Activated CD4-positive, alpha-beta T cell treated with anti-CD3 and anti-CD28 coated beads for 36 hours (primary cell): ENCODE measurements at regions of chr19 and their contacts with region 1.

Region 1: DNA sequence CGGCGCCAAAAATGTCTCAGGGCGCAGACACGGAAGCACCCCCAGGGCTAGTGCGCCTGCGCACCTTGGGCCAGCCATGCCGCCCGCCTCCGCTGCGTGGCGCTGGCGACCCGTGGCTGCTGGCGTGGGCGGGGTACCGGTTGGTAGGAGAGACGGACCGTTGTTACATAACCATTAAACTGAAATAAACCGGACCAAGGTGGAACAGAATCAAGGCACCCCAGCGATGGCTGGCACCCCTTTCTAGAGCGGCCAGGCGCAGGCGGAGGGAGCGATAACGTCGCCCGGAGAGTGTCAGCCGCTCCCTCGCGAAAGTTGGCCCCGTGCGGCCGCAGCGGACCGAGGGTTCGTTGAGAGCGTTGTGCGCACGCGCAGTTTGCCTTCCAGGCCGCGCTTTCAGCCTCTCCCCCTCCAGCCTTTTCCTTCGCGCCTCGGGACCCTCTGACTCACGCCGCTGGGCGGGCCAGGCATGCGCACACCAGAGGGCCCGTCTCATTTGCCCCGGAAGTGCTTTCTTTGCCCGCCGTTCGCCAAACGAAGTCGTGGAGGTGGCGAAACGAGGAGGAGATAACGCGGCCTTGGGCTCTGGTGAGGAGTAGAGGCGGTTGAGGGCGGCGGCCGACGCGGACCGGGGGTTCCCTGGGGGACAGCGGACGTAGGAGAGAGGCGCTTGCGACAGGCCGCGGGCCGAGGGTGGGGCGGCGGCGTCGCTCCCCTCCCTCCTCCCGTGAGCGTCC is at the starts of genes PLEKHJ1 and SF3A2:
- DNase-seq: peak; percentile 99
- ATAC-seq: peak; percentile 87
- H3K4me3 Mint-ChIP-seq: peak within 1 kb of the TSS; percentile 94
- H3K27ac Mint-ChIP-seq: peak within 1 kb of the TSS; percentile 97
- H3K4me1 Mint-ChIP-seq: peaks cover 52% of the 10 kb centered on the region
- H3K27me3 Mint-ChIP-seq: no peaks in the 10 kb centered on the region
- total RNA-seq, gene PLEKHJ1: 38.4 to 61.8 TPM
- total RNA-seq, gene SF3A2: 146 to 192 TPM

Region 2: GRCh38 chr19:1905071-1905862 is 331.2 kb before region 1 on chr19 and contains the starts of genes ADAT3 and SCAMP4:
- CTCF ChIA-PET with region 1: no interaction called
- POLR2A ChIA-PET with region 1: no interaction called
- intact Hi-C with region 1: loop called in 1 of 2 experiments (anchors 1 kb)
- DNase-seq: peak; percentile 100
- ATAC-seq: peak; percentile 98
- H3K4me3 Mint-ChIP-seq: peak within 1 kb of the TSS; percentile 84
- H3K27ac Mint-ChIP-seq: peak within 1 kb of the TSS; percentile 82
- H3K4me1 Mint-ChIP-seq: peaks cover 45% of the 10 kb centered on the region
- H3K27me3 Mint-ChIP-seq: no peaks in the 10 kb centered on the region
- total RNA-seq, gene ADAT3: 5.6 to 6.1 TPM
- total RNA-seq, gene SCAMP4: 20.5 to 25.6 TPM

Region 3: DNA sequence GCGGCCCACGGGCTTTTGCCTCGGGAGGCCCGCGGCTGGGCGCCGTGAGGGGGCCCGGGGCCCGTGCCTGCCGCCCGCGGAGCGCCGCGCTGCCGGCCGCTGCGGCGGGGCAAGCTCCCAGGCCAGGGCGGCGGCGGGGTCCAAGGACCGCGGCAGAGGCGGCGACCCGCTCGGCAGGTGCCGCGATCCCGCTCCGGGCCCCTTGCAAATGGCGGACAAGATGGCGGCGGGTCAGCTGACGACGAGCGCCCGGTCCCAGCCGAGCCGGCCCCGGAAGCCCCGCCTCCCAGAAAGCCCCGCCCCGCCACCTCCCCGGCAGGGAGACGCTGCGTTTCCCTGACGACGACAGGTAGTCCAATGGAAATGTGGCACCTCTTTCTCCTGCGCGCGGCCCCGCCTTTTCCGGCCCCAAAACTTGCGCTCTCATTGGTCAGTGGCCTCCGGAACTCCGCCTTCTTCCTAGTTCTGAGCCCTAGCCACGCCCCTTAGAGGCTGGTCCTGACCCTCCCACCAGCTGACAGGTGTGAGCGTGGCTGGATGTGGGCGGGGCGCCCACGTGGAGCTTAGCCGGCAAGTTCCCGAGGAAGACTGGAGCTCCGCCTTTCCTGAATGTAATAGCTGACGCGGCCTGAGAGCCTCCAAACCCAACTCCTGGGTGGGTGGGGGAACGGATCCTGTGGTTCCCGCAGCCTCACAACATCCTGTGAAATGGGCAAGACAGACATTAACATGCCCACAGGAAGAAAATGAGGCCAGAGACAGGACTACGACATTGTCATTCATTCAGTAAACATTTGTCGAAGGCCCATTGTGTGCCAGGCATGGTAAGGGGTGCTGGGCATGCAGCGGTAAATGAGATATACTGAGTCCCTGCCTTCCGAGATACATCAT is 84.9 kb before region 1 on chr19 and contains the start of gene AP3D1:
- CTCF ChIA-PET with region 1: interaction called, 3 read pairs
- POLR2A ChIA-PET with region 1: interaction called, 3 read pairs
- intact Hi-C with region 1: loop called (anchors 1 to 2 kb)
- DNase-seq: peak; percentile 100
- ATAC-seq: peak; percentile 90
- H3K4me3 Mint-ChIP-seq: peak within 1 kb of the TSS; percentile 81
- H3K27ac Mint-ChIP-seq: peak within 1 kb of the TSS; percentile 89
- H3K4me1 Mint-ChIP-seq: peaks cover 42% of the 10 kb centered on the region
- H3K27me3 Mint-ChIP-seq: no peaks in the 10 kb centered on the region
- total RNA-seq, gene AP3D1: 82.7 to 105 TPM

Region 4: DNA sequence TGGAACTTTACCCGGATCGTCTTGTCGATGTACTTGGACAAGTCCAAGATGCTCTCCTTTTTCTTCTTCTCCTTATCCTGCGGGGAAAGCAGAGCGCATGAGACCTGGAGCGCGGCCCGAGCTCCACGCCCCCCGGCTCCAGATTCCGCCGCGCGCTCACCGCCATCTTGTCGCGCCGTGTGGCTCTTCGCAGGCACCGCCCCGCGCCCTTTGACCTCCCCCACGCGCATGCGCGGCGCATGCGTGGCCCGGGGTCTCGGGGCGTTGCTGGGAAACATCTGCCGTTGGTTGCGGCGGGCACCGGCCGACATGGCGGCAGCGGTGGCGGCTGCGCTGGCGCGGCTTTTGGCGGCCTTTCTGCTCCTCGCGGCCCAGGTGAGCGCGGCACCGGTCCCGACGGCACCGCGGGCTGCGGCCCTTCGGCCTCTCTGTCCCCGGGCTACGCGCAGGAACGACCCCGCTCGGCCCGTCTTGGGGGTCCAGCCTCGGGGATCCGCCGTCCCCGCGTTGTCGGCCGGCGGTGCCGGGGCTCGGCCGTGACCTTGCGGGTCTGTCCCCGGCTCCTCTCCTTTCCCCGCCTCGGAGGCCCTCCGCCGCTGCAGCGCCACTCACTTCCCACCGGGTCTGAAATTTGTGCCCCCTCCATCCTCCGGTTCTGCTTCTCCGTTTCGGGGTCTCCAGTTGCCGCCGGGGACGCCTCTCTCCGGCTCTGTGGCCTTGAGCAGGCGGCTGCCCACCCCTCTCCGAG is 92.1 kb after region 1 on chr19 and contains the starts of genes LSM7 and SPPL2B:
- CTCF ChIA-PET with region 1: no interaction called
- POLR2A ChIA-PET with region 1: no interaction called
- intact Hi-C with region 1: loop called in 1 of 2 experiments (anchors 1 kb)
- DNase-seq: peak; percentile 95
- ATAC-seq: peak; percentile 78
- H3K4me3 Mint-ChIP-seq: peak within 1 kb of the TSS; percentile 98
- H3K27ac Mint-ChIP-seq: peak within 1 kb of the TSS; percentile 99
- H3K4me1 Mint-ChIP-seq: peaks cover 69% of the 10 kb centered on the region
- H3K27me3 Mint-ChIP-seq: no peaks in the 10 kb centered on the region
- total RNA-seq, gene LSM7: 113 to 134 TPM
- total RNA-seq, gene SPPL2B: 37.7 to 48.5 TPM

Region 5: DNA sequence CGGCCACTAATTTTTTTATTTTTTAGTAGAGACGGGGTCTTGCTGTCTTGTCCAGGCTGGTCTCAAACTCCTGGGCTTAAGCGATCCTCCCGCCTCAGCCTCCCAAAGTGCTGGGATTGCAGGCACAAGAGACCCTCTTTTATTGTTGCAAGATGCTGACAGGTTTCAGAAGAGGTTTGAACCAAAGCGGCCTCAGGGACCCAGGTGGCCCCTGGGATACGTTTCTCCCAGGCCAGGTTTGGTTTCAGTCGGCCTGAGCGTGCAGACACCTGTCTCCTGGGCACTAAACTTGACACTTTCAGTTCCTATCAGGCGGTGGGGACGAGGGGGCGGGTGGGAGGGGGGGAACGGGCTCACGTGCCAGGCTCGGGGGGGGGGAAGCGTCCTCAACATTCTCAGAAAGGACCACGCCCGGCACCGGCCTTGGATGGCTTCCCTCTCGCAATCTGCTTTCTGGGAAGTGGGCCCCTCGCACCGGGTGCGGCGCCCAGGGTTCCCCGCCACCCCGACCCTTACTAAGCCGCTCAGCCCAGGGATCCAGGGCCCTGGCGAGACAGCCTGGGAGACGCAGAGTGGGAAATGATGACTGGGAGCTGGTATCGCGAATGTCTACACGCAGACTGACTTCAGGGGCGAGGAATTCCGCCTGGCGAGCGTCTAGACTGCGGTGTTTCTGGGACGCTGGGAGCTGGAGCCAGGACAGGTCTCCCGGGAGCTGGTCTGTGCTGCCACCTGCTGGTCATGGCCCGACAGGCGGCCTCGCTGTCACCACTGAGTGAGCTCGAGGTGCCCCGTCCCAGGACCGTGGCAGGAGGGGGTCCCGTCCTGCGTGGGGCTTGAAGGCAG is 374.4 kb after region 1 on chr19:
- CTCF ChIA-PET with region 1: no interaction called
- POLR2A ChIA-PET with region 1: no interaction called
- intact Hi-C with region 1: loop called in 1 of 2 experiments (anchors 10 kb)
- DNase-seq: peak; percentile 96
- ATAC-seq: peak; percentile 67
- H3K4me3 Mint-ChIP-seq: peak overlapping the region; percentile 71
- H3K27ac Mint-ChIP-seq: peak overlapping the region; percentile 83
- H3K4me1 Mint-ChIP-seq: peaks cover 53% of the 10 kb centered on the region
- H3K27me3 Mint-ChIP-seq: peaks cover 5% of the 10 kb centered on the region

Region 6: GRCh38 chr19:2840794-2841790 is 604.6 kb after region 1 on chr19 and contains the start of gene ZNF555:
- CTCF ChIA-PET with region 1: no interaction called
- POLR2A ChIA-PET with region 1: no interaction called
- intact Hi-C with region 1: loop called in 1 of 2 experiments (anchors 1 kb)
- DNase-seq: peak; percentile 99
- ATAC-seq: peak; percentile 100
- H3K4me3 Mint-ChIP-seq: peak within 1 kb of the TSS; percentile 77
- H3K27ac Mint-ChIP-seq: peak within 1 kb of the TSS; percentile 55
- H3K4me1 Mint-ChIP-seq: peaks cover 11% of the 10 kb centered on the region
- H3K27me3 Mint-ChIP-seq: no peaks in the 10 kb centered on the region
- total RNA-seq, gene ZNF555: 1.9 TPM